AG04450 (cell line): ENCODE measurements at regions of chr11 and their contacts with region 1.

Region 1: DNA sequence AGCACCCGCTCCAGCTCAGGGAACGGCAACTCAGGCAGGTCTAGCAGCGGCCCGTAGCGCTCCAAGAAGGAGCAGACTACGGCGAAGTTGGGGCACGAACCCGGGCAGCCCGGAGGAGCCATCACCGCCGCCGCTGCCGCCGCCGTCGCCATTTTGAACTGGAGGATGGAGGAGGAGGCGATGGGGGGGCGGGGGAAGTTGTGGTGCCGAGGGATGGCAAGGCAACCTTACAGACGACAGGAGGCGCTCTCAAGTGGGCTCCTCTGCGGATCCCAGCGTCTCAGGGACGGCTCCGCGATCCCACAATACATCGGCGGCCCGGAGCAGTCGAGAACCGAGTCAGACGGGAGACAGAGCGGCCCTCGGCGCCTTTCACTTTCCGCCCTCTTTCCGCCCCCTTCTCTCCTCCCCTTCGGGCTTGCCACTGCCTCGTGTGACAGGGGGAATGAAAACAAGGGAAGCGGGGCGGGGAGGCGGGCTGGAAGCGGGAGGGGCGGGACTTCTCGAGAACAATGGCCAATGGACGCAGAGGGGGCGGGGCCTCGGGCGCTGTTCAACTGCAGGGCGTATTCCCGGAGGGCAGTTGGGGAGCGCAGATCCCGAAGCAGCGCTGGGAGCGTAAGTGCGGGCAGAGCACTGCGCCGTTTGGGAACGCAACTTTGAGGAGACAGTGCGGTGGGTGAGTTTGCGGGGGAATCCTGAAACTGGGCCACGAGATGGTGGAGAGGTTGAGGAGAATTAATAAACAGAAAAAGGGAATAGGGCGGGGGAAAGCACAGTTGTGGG is at the starts of genes AAMDC and RSF1:
- DNase-seq: peak; percentile 98
- H3K4me3 ChIP-seq: peak within 1 kb of the TSS; percentile 94
- H3K27ac ChIP-seq: peak within 1 kb of the TSS; percentile 79
- H3K27me3 ChIP-seq: no peaks in the 10 kb centered on the region
- CTCF ChIP-seq: peak; percentile 82
- polyA plus RNA-seq, gene AAMDC: 45.9 and 57.7 TPM in 2 replicates
- polyA plus RNA-seq, gene RSF1: 26.5 and 26.8 TPM in 2 replicates

Region 2: DNA sequence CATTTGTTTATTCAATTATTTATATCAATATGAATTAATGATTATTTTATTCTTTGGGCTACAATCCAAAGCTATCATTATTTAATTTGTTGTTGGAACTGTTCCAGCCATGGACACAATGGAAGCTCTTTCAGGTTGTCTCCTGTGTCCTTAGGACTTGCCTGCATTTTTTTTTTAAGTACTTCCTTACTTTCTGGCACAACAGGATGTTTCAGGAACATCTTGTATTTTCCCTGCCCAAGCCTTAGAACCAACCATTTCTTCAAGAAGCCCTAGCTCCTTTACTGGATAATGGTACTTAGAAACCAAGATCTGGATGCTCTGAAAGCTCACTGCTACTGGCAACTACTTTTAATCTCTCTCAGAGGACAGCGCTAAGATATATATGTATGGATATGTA is 125.3 kb before region 1 on chr11:
- CTCF ChIA-PET with region 1: no interaction called
- POLR2A ChIA-PET with region 1: no interaction called
- DNase-seq: no peak
- H3K4me3 ChIP-seq: no peak overlapping the region
- H3K27ac ChIP-seq: no peak overlapping the region
- H3K27me3 ChIP-seq: no peaks in the 10 kb centered on the region
- CTCF ChIP-seq: no peak

Region 3: GRCh38 chr11:78000193-78000592 is 179.4 kb after region 1 on chr11:
- CTCF ChIA-PET with region 1: interaction called, 19 read pairs
- POLR2A ChIA-PET with region 1: interaction called, 5 read pairs
- DNase-seq: peak; percentile 53
- H3K4me3 ChIP-seq: no peak overlapping the region
- H3K27ac ChIP-seq: no peak overlapping the region
- H3K27me3 ChIP-seq: no peaks in the 10 kb centered on the region
- CTCF ChIP-seq: peak; percentile 73

Region 4: DNA sequence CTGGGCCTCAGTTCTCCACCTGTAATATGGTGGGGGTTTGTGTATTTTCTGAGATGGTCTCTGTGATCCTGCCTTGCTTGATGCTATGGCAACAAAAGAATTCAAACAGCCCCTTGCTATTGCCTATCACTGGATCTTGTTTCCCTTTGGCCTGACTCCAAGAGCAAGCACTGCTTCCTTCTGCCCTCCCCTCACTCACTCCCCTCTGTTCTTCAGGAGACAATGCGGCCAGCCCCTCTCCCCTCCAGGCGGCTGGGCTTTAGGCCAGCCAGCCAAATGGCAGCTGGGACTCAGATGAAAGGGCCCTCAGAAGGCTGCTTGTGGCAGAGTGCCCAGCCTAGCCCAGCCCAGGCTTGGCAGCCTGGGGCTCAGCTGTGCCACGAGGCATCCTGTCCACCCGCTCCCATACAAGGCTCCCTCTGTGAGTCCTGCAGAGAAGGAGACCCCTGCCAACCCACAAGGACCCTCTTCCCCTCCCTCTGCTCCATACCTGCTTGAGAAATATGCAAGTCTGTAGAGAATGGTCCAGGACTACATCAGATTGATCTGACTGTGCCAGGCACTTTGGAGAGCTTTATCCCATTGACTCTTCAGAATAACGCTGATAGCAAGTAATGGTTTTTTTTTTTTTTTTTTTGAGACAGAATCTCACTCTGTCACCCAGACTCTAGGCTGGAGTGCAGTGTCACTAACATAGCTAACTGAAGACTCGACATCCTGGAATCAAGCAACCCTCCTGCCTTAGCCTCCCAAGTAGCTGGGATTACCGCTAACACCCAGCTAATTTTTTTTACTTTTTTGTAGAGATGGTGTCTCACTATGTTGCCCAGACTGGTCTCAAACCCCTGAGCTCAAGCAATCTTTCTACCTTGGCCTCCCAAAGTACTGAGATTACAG is 209.9 kb after region 1 on chr11:
- CTCF ChIA-PET with region 1: no interaction called
- POLR2A ChIA-PET with region 1: no interaction called
- DNase-seq: no peak
- H3K4me3 ChIP-seq: no peak overlapping the region
- H3K27ac ChIP-seq: peak overlapping the region; percentile 21
- H3K27me3 ChIP-seq: no peaks in the 10 kb centered on the region
- CTCF ChIP-seq: no peak